WTC11 (cell line): ENCODE measurements at regions of chr2 and their contacts with region 1.

Region 1: DNA sequence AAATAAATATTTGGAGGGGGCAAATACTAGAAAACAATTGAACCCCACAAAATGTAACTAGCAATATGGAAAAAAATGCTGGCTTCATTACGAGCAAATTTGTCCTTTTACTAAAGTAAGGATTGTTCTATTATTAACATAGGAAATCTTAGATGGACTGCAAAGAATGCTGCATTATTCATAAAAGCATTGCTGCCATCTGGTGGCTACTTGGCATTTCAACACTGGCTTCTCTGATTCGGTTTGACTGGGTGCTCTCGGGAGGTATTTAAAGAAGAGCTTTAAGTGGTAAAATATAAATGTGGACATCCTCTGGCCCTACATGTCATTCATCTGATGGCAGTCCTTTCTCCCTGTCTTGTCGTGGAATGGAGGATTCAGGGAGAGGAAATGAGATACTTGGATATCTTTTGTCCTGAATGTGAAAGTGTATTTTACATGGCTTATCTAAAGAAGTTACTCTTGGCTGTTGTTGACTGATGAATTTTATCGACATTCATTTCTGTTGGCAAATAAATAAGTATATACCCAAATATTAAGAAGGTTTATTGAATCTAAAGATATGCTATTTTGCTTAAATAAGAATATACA is 130.2 kb downstream of the ARHGAP15 start:
- DNase-seq: peak; percentile 64
- ATAC-seq: peak; percentile 51
- H3K4me3 Mint-ChIP-seq: no peak overlapping the region
- H3K27ac Mint-ChIP-seq: no peak overlapping the region
- H3K4me1 Mint-ChIP-seq: peaks cover 17% of the 10 kb centered on the region
- H3K27me3 Mint-ChIP-seq: no peaks in the 10 kb centered on the region
- CTCF ChIP-seq: peak; percentile 54; the same call in 1 of the 2 replicates

Region 2: GRCh38 chr2:143034292-143035074 is 225.0 kb before region 1 on chr2:
- CTCF ChIA-PET with region 1: interaction called, 10 read pairs
- POLR2A ChIA-PET with region 1: no interaction called
- DNase-seq: peak; percentile 30
- ATAC-seq: peak; percentile 78
- H3K4me3 Mint-ChIP-seq: no peak overlapping the region
- H3K27ac Mint-ChIP-seq: no peak overlapping the region
- H3K4me1 Mint-ChIP-seq: no peaks in the 10 kb centered on the region
- H3K27me3 Mint-ChIP-seq: no peaks in the 10 kb centered on the region
- CTCF ChIP-seq: peak; percentile 74

Region 3: GRCh38 chr2:143110758-143111428 is 148.6 kb before region 1 on chr2:
- CTCF ChIA-PET with region 1: interaction called, 27 read pairs
- POLR2A ChIA-PET with region 1: no interaction called
- DNase-seq: peak; percentile 66
- ATAC-seq: peak; percentile 94
- H3K4me3 Mint-ChIP-seq: no peak overlapping the region
- H3K27ac Mint-ChIP-seq: no peak overlapping the region
- H3K4me1 Mint-ChIP-seq: no peaks in the 10 kb centered on the region
- H3K27me3 Mint-ChIP-seq: no peaks in the 10 kb centered on the region
- CTCF ChIP-seq: peak; percentile 63

Region 4: DNA sequence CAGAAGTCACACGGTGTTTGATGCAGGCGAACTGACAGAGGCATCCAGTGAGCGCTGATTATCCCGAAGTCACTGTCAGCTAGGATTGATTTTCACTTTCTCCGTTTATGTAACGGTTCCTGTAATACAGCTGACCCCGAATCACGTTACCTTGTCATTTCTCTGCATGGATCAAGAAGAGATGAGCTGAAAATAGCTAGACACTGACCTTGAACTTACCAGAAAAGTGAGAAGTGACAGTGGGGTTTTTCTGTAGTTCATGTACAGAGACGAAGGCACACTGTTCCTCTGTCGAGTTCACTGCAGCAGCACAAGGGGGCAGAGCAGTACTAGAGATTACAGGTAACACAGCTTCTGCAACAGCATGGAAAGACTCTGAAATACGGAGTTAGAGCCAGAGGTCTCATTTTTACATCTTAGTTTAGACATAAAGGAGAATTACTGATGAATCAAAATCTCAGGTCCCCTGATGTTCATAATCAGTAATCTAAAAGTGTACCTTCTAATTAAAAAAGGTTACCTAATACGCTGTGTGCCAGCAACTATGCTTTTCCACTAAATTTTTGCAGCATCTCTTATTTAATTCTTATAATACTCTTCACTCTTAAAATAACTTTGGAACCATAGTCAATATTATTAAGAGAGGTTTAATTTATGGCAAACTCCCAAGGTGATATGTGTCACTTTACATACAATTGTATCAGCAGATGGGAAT is 97.2 kb before region 1 on chr2:
- CTCF ChIA-PET with region 1: interaction called, 53 read pairs
- POLR2A ChIA-PET with region 1: no interaction called
- DNase-seq: peak; percentile 40
- ATAC-seq: peak; percentile 99
- H3K4me3 Mint-ChIP-seq: no peak overlapping the region
- H3K27ac Mint-ChIP-seq: no peak overlapping the region
- H3K4me1 Mint-ChIP-seq: no peaks in the 10 kb centered on the region
- H3K27me3 Mint-ChIP-seq: no peaks in the 10 kb centered on the region
- CTCF ChIP-seq: peak; percentile 23; the same call in 1 of the 2 replicates

Region 5: GRCh38 chr2:143171532-143172216 is 87.8 kb before region 1 on chr2:
- CTCF ChIA-PET with region 1: interaction called, 19 read pairs
- POLR2A ChIA-PET with region 1: no interaction called
- DNase-seq: no peak
- ATAC-seq: peak; percentile 81
- H3K4me3 Mint-ChIP-seq: no peak overlapping the region
- H3K27ac Mint-ChIP-seq: no peak overlapping the region
- H3K4me1 Mint-ChIP-seq: peaks cover 21% of the 10 kb centered on the region
- H3K27me3 Mint-ChIP-seq: no peaks in the 10 kb centered on the region
- CTCF ChIP-seq: no peak

Region 6: DNA sequence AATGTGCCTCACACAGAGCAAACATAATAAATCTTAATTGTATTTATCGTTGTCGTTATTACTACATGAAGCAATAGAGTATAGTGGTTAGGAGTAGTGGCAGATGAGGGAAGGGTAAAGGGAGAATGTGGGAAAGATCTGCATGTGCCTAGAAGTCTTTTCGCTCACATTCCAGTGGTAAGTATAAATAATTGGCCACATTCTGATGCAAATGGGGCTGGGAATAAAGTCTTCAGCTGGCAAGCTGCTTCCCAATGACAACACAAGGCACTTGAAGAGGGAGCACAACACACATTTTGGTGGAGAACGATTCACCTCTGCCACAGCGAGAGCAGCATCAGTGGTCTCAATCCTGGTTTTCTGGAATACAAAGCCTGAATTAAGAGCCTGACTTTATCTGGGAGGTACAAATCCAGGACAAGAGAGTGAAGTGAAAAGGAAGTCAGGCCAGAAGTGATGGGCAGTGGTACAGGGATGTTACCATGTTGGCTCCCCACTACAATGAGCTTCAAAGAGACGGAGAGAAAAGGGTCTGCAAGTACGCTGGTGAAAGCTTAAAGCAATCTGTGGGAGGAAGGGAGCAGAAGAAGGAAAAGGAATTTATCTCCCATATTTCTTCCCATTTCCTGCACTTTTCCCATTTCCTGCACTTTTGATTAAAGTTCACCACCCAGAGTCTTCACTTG is 17.9 kb before region 1 on chr2:
- CTCF ChIA-PET with region 1: interaction called, 10 read pairs
- POLR2A ChIA-PET with region 1: no interaction called
- DNase-seq: peak; percentile 15
- ATAC-seq: peak; percentile 98
- H3K4me3 Mint-ChIP-seq: peak overlapping the region; percentile 39
- H3K27ac Mint-ChIP-seq: peak overlapping the region; percentile 97
- H3K4me1 Mint-ChIP-seq: peaks cover 15% of the 10 kb centered on the region
- H3K27me3 Mint-ChIP-seq: no peaks in the 10 kb centered on the region
- CTCF ChIP-seq: no peak

Region 7: DNA sequence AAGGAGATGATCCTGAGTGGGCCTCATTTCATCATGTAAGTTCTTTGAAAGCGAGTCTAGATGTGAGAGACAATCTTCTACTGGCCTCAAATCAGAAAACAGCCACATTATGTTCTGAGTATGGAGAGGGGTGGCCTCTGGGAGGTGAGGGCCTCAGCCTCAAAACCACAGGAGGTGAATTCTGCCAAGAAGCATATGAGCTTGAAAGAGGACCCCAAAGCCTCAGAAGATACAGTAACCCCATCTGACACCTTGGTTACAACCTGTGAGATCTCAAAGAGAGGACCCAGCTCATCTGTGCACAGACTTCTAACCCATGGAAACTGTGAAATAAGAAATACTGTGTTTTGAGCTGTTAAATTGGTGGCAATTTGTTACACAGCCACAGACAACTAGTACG is 69.8 kb after region 1 on chr2:
- CTCF ChIA-PET with region 1: no interaction called
- POLR2A ChIA-PET with region 1: no interaction called
- DNase-seq: no peak
- ATAC-seq: no peak
- H3K4me3 Mint-ChIP-seq: no peak overlapping the region
- H3K27ac Mint-ChIP-seq: no peak overlapping the region
- H3K4me1 Mint-ChIP-seq: peaks cover 7% of the 10 kb centered on the region; the same call in 1 of the 2 replicates
- H3K27me3 Mint-ChIP-seq: no peaks in the 10 kb centered on the region; the same call in 1 of the 2 replicates
- CTCF ChIP-seq: no peak